ENCODE measurements at regions of chr19 and their contacts with region 1.

Region 1: GRCh38 chr19:45643024-45643926 is 4.1 kb upstream of the EML2 start:
- H3K4me3 ChIP-seq: no peak overlapping the region
- H3K27ac ChIP-seq: no peak overlapping the region
- H3K4me1 ChIP-seq: peaks cover 12% of the 10 kb centered on the region
- CTCF ChIP-seq: peak; percentile 95

Region 2: DNA sequence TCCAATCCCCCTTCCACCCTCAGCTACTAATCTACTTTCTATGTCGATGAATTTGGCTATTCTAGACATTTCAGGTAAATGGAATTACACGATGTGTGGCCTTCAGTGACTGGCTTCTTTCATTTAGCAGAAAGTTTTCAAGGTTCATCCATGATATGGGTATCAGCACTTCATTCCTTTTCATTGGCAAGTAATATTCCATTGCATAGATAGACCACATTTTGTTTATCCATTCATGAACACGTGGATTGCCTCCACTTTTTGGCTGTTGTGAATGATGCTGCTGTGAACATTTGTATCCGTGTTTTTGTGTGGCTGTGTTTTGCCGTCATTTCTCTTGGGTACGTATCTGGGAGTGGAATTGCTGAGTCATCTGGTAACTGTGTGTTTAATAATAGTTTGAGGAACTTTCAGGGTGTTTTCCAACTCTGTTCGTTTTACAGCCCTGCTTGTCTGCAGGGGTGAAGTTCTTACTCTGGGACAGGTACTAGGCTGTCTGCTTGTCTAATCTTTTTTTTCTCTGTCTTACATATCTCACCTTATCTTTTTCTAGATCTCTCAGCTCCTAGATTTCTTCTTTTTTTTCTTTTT is 359.7 kb before region 1 on chr19:
- CTCF ChIA-PET with region 1: no interaction called
- POLR2A ChIA-PET with region 1: no interaction called
- H3K4me3 ChIP-seq: no peak overlapping the region
- H3K27ac ChIP-seq: no peak overlapping the region
- H3K4me1 ChIP-seq: no peaks in the 10 kb centered on the region
- CTCF ChIP-seq: no peak

Region 3: GRCh38 chr19:45363861-45364459 is 279.3 kb before region 1 on chr19:
- CTCF ChIA-PET with region 1: no interaction called
- POLR2A ChIA-PET with region 1: no interaction called
- H3K4me3 ChIP-seq: no peak overlapping the region
- H3K27ac ChIP-seq: no peak overlapping the region
- H3K4me1 ChIP-seq: no peaks in the 10 kb centered on the region
- CTCF ChIP-seq: no peak

Region 4: GRCh38 chr19:45405435-45406225 is 237.6 kb before region 1 on chr19:
- CTCF ChIA-PET with region 1: interaction called, 23 read pairs
- POLR2A ChIA-PET with region 1: no interaction called
- H3K4me3 ChIP-seq: peak overlapping the region; percentile 82
- H3K27ac ChIP-seq: peak overlapping the region; percentile 96
- H3K4me1 ChIP-seq: 0 out of 2 replicates have a peak, but pooled peaks cover 7% of the 10 kb centered on the region
- CTCF ChIP-seq: no peak

Region 5: DNA sequence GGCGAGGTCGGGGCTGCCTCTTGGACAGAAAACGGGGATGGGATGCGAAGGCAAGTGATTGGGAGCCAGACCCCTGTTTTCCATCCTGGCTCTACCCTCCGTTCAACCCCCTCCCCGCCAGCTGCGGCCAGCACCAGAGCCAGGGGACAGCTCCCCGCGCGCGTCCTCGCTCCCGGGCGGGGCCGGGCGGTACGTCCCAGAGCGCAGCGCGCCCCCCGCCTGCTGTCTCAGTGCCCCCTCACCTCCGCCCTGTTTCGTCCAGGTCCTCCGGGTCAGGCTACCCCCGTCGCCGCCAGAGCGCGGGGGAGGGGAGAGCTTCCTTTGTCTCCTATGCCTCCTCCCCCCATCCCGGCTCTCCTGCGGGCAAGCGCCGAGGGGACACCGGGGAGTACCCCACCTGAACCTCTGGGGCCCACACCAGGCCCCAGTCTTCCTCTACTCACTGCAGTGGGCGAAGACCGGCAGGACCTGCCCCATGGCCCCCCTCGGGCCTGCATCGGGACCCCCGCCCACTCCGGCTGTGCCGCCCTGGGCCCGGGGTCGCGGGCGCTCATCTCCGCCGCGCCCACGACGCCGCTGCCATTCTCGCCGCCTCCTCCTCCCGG is 146.8 kb before region 1 on chr19:
- CTCF ChIA-PET with region 1: interaction called, 17 read pairs
- POLR2A ChIA-PET with region 1: interaction called, 7 read pairs
- H3K4me3 ChIP-seq: peak overlapping the region; percentile 53
- H3K27ac ChIP-seq: no peak overlapping the region
- H3K4me1 ChIP-seq: peaks cover 6% of the 10 kb centered on the region
- CTCF ChIP-seq: no peak

Region 6: DNA sequence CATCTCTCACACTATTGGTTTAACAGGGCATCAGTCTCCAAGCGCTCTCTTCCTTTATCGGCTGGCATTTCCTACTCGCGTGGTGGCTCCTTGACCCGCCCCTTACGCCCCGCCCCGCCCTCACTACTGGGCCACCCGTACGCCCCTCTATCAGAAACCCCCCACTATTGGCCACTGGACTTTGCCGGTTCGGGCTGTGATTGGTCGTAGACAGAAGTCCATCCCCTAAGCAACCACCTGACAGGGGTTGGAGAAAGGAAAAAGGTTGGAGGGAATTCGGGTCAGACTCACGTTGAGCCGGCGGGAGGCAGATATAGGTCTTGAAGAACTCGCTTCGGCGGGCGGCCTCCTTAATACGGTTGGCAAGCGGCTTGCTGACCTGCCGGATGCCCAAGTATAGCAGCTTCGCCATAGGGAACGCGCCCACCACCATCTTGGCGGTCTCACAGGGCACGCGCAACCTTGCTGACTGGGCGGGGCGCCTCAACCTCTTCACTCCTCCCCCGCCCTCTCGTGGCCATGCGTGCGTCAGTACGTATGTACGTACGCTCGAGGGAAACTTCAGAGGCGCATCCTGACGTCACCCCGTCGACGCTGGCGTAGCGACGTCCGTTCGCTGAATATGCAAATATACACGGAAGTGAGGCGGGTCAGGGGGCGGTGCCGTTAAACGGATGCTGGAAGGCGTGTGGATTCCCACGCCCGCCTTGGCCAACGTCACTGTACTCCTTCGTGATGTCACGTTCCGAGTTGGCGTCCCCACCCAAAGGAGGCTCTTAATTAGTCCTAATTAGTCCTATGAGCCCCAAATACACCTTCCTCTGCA is 58.7 kb before region 1 on chr19 and contains the start of gene OPA3:
- CTCF ChIA-PET with region 1: interaction called, 10 read pairs
- POLR2A ChIA-PET with region 1: interaction called, 22 read pairs
- H3K4me3 ChIP-seq: peak within 1 kb of the TSS; percentile 85
- H3K27ac ChIP-seq: peak within 1 kb of the TSS; percentile 74
- H3K4me1 ChIP-seq: peaks cover 4% of the 10 kb centered on the region
- CTCF ChIP-seq: peak; percentile 33; the same call in 1 of the 2 replicates

Region 7: GRCh38 chr19:45615795-45616708 is 27.2 kb before region 1 on chr19:
- CTCF ChIA-PET with region 1: interaction called, 102 read pairs
- POLR2A ChIA-PET with region 1: interaction called, 14 read pairs
- H3K4me3 ChIP-seq: no peak overlapping the region
- H3K27ac ChIP-seq: peak overlapping the region; percentile 56; the same call in 1 of the 2 replicates
- H3K4me1 ChIP-seq: peaks cover 13% of the 10 kb centered on the region
- CTCF ChIP-seq: no peak

Region 8: DNA sequence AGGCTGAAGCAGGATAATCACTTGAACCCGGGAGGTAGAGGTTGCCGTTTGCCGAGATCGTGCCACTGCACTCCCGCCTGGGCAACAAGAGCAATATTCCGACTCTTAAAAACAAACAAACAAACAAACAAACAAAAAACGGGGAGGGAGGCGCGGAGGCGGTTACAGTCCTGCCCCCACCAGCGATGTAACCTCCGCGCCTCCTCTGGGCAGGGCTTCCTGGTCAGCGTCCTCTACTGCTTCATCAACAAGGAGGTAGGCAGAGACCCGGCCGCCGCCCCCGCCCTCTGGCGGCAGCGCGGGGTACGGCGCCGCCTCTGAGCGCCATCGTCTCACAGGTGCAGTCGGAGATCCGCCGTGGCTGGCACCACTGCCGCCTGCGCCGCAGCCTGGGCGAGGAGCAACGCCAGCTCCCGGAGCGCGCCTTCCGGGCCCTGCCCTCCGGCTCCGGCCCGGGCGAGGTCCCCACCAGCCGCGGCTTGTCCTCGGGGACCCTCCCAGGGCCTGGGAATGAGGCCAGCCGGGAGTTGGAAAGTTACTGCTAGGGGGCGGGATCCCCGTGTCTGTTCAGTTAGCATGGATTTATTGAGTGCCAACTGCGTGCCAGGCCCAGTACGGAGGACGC is 38.2 kb after region 1 on chr19:
- CTCF ChIA-PET with region 1: interaction called, 60 read pairs
- POLR2A ChIA-PET with region 1: interaction called, 10 read pairs
- H3K4me3 ChIP-seq: peak overlapping the region; percentile 25
- H3K27ac ChIP-seq: no peak overlapping the region; the same call in 1 of the 2 replicates
- H3K4me1 ChIP-seq: peaks cover 11% of the 10 kb centered on the region
- CTCF ChIP-seq: peak; percentile 97

Measured in HEK293 (cell line).